ENCODE measurements at regions of chr10 and their contacts with region 1.

Region 1: GRCh38 chr10:74118804-74119203 is 31.8 kb downstream of the AP3M1 start:
- DNase-seq: peak; percentile 21 to 56
- ATAC-seq: peak; percentile 84 to 85
- H3K4me3 ChIP-seq: no peak overlapping the region
- H3K27ac ChIP-seq: peak overlapping the region; percentile 58 to 76
- H3K4me1 ChIP-seq: peaks cover 28% of the 10 kb centered on the region
- CTCF ChIP-seq: no peak
- EP300 ChIP-seq: no peak
- POLR2A ChIP-seq: no peak
- RAD21 ChIP-seq: no peak

Region 2: GRCh38 chr10:74103560-74104248 is 15.1 kb before region 1 on chr10:
- CTCF ChIA-PET with region 1: interaction called, 35 read pairs
- POLR2A ChIA-PET with region 1: no interaction called
- DNase-seq: peak; percentile 48 to 51
- ATAC-seq: peak in 1 of 2 experiments; percentile 76; a peak in 3 of 6 replicates
- H3K4me3 ChIP-seq: no peak overlapping the region
- H3K27ac ChIP-seq: no peak overlapping the region
- H3K4me1 ChIP-seq: no peaks in the 10 kb centered on the region
- CTCF ChIP-seq: peak; percentile 58
- EP300 ChIP-seq: no peak
- POLR2A ChIP-seq: no peak
- RAD21 ChIP-seq: peak; percentile 59